Activated CD4-positive, alpha-beta T cell treated with anti-CD3 and anti-CD28 coated beads for 36 hours (primary cell): ENCODE measurements at regions of chr6 and their contacts with region 1.

Region 1: DNA sequence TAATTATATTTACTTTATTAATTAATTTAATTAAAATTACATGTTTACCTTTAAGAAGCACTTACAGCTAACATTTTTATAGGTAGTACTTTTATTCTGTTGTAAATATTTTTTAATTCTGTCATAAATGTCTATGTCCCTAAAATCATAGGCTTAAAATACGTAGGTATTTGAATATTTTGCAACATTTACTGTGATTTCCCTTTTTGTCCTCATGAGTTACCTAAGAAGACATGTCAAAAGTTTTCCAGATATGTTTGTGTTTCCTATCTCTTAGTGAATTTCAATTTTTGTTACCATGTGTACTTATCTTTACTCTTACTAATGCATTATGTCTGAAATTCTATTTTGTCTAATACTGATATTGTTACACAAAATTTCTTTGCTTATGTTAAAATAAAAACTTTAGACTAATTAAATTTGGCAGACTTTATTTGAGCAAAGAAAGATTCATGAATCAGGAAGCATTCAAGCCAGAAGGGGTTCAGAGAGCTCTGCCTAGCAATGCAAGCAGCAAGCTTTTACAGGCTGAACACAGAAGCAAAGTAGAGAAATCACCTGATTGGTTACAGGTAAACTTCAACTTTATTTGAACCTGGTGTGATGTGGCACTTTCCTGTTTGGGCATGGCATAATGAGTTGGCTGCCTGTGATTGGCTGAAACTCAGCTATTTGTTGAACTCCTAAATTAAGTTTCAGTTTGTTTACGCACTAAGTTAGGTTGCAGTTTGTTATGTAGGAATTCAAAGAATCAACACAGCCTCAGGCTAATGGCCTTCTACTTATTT is 123.2 kb upstream of the TMEM170B start:
- DNase-seq: peak; percentile 60
- ATAC-seq: peak; percentile 45
- H3K4me3 Mint-ChIP-seq: no peak overlapping the region
- H3K27ac Mint-ChIP-seq: peak overlapping the region; percentile 42
- H3K4me1 Mint-ChIP-seq: peaks cover 50% of the 10 kb centered on the region
- H3K27me3 Mint-ChIP-seq: no peaks in the 10 kb centered on the region

Region 2: DNA sequence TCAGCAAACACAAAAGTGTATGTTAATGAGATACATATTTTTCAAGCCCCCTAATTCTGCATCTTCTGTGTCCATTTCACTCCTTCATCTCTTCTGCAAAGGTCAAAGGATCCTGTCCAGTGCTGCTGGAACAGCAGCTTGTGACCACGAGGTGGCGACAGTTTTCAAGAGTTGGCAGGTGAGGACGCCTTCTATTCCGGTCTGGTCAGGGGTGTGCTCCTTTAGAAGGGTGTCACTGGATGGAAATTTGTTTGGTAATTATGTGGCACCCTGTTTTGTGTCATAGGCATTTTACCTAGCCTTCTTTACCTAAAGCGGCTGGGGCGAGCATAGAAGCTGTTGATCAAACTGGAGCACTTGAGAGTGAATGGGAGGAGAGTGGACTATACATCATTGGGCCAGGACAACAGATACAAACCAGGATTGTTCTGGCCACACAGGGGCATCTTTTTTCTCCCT is 269.9 kb before region 1 on chr6:
- CTCF ChIA-PET with region 1: no interaction called
- POLR2A ChIA-PET with region 1: no interaction called
- intact Hi-C with region 1: loop called in 1 of 2 experiments (anchors 1 kb)
- DNase-seq: peak; percentile 89
- ATAC-seq: peak; percentile 94
- H3K4me3 Mint-ChIP-seq: no peak overlapping the region
- H3K27ac Mint-ChIP-seq: no peak overlapping the region
- H3K4me1 Mint-ChIP-seq: peaks cover 7% of the 10 kb centered on the region
- H3K27me3 Mint-ChIP-seq: no peaks in the 10 kb centered on the region

Region 3: GRCh38 chr6:11224252-11224965 is 190.0 kb before region 1 on chr6:
- CTCF ChIA-PET with region 1: no interaction called
- POLR2A ChIA-PET with region 1: no interaction called
- intact Hi-C with region 1: loop called in 1 of 2 experiments (anchors 2 kb)
- DNase-seq: peak; percentile 67
- ATAC-seq: peak; percentile 94
- H3K4me3 Mint-ChIP-seq: peak overlapping the region; percentile 10
- H3K27ac Mint-ChIP-seq: peak overlapping the region; percentile 75
- H3K4me1 Mint-ChIP-seq: peaks cover 51% of the 10 kb centered on the region
- H3K27me3 Mint-ChIP-seq: no peaks in the 10 kb centered on the region

Region 4: DNA sequence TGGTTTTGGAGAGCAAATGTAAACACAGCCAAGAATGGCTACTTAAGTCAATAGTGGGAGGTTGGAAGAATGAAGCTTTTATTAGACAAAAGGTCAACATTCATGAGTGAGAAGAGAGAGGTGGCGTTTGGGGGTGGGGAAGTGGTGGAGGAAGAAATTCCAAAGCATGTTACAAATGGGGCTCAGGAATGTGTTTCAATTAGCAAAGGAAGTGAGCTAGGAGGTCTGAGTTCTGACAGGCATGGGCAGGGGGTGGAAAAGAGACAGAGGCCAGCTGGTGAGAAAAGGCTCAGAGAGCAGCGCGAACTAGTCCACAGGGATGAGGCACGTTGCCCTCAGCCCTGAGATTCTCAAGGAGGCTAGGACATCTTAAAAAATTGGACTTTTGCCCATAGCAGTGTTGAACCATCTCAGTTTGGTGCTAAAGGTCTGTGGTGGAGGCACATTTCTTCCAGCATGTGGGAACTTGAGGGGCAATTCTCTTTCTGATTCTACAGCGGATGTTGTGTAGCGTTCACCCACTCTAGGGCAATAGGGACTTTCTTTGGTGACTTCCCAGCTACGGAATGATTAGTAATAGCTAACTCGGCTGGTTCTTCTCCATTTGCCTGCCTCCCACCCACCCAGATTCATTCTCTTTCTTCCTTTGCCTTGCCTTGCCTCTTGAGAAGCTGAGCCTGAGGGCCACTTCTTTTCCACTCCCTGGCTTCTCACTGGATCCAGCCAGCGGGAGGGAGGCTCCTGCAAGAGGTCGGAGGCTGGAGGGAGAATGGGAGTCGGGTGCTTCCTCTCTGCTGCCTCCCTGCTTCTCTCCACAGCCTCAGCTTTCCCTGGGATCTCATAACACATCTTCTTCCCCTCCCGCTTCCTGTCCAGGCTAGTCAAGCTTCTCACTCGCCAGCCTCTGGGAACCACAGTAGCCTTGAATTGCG is 136.8 kb before region 1 on chr6:
- CTCF ChIA-PET with region 1: no interaction called
- POLR2A ChIA-PET with region 1: interaction called, 4 read pairs
- intact Hi-C with region 1: loop called in 1 of 2 experiments (anchors 5 kb)
- DNase-seq: peak; percentile 53
- ATAC-seq: peak; percentile 76
- H3K4me3 Mint-ChIP-seq: peak overlapping the region; percentile 40
- H3K27ac Mint-ChIP-seq: peak overlapping the region; percentile 91
- H3K4me1 Mint-ChIP-seq: peaks cover 46% of the 10 kb centered on the region
- H3K27me3 Mint-ChIP-seq: no peaks in the 10 kb centered on the region

Region 5: DNA sequence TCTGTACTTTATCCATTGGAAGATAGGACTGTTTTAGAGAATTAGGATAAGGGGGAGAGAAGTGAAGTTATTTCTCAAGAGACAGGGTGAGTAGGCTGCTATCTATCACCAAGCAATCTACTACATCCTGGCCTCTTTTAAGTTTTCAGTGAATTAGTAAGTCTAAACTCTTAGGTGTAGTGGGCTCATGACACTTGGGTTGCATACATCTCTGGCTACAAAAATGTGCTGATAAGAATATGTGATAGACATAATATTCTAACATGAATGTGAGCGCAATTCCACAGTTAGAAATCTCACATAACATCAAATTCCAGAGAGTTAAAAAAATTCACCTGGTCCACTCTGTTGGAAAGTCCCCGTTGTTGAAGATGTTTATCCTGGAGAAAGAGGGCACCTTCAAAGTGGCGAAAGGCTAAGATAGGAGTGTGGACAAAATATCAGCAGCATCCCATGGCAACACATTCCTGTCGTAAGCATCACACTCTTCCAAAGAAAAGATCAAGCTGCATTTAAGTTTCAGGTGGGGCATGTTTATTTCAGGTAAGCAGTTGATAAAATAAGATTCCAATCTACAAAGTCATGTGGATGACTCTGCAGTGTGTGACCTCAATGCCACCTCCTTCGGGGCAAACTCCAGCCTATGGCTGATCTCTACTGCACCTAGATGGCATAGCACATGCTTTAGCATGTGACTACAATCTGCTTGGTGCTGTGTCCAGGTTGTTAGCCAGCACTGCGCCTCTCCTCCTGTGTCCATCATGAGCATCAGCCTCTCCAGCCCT is 70.2 kb before region 1 on chr6:
- CTCF ChIA-PET with region 1: no interaction called
- POLR2A ChIA-PET with region 1: no interaction called
- intact Hi-C with region 1: loop called in 1 of 2 experiments (anchors 5 kb)
- DNase-seq: no peak
- ATAC-seq: no peak
- H3K4me3 Mint-ChIP-seq: no peak overlapping the region
- H3K27ac Mint-ChIP-seq: peak overlapping the region; percentile 86
- H3K4me1 Mint-ChIP-seq: peaks cover 78% of the 10 kb centered on the region
- H3K27me3 Mint-ChIP-seq: no peaks in the 10 kb centered on the region

Region 6: DNA sequence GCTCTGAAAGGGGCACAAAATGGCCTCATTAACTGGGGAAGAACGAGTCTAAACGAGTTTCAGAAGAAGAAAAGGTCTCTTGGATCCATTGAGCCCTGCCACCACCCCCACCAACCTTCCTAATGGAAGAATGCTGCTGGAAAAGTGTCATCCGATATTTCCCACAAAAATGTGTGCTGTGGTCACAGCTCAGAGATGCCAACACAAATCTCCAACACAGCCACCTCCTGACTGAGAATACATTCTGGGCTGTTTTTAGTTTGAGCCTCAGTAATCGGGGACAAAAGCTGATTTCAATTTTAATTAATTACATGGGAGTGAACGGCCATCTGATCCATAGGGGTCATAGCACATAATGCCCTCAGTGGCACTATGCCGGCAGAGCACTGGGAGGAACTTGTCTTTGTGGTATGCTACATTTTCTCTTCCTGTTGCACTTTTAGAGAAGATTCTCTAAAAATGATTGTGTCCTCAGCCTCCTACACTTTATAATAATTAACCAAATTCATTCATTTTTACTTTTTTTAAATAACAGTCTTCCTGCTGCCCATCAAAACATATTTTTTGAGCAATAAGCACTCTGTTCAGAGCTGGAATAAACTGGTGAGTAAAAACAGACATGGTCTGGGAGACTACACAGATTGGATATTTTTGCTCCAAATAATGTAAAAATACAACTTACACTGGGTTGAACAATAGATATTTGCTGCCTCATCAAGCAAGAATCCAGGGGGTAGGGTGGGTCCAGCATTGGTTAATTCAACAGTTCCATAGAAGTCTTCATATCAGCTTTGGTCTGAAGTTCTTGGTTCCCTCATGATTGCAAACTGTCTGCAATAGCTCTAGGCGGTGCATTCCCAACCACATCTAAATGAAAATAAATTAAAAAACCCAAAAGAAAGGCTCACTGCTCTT is 20.4 kb before region 1 on chr6:
- CTCF ChIA-PET with region 1: no interaction called
- POLR2A ChIA-PET with region 1: no interaction called
- intact Hi-C with region 1: no loop called
- DNase-seq: no peak
- ATAC-seq: no peak
- H3K4me3 Mint-ChIP-seq: no peak overlapping the region
- H3K27ac Mint-ChIP-seq: no peak overlapping the region
- H3K4me1 Mint-ChIP-seq: no peaks in the 10 kb centered on the region
- H3K27me3 Mint-ChIP-seq: peaks cover 3% of the 10 kb centered on the region